PC-9 (cell line): ENCODE measurements at regions of chr2 and their contacts with region 1.

Region 1: GRCh38 chr2:120012771-120013596 is at the start of gene EPB41L5:
- DNase-seq: peak; percentile 88 to 95
- H3K4me3 ChIP-seq: peak within 1 kb of the TSS; percentile 82
- H3K27ac ChIP-seq: peak within 1 kb of the TSS; percentile 88
- H3K4me1 ChIP-seq: peaks cover 24% of the 10 kb centered on the region
- H3K27me3 ChIP-seq: no peaks in the 10 kb centered on the region
- CTCF ChIP-seq: no peak
- total RNA-seq, gene EPB41L5: 18.4 and 21.6 TPM in 2 replicates

Region 2: DNA sequence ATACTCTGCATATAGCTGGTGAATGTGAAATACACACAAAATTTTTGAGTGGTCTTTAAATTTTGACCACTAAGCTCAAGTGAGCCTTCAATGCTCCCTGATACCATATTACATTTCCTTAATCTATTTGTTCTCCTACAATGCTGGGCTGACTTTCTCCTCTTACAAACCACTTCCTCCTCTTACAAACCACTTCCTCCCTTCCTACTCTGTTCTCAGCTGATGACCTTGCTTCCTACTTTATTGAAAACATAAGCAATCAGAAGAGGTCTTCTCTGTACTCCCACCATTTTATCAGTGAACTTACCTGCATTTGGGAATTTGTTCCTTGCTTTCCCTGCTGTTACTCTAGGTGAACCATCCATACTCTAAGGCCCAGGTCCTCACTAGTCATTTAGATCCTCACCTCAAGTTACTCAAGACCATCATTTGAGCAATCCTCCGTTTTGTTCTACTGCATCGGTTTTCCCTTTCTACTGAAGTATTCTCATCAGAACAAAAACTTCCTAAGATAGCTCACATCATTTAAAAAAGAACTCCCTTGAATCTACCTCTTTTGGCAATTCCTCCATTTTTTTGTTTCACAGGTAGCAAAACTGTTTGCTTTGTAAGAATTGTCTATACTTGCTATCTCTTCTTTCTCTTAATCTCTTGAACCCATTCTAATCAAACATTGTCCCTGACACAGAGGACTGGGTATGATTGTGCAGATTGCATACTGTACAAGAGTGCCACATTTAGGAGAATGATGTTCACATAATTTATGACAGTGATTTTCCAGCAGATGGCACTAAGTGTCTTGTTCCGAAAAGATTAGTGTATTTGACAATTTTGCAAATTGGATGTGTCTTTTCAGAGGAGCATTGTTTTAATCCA is 96.4 kb after region 1 on chr2:
- CTCF ChIA-PET with region 1: no interaction called
- POLR2A ChIA-PET with region 1: interaction called, 3 read pairs
- intact Hi-C with region 1: loop called (anchors 2 kb)
- DNase-seq: peak in 1 of 2 experiments; percentile 54
- H3K4me3 ChIP-seq: no peak overlapping the region
- H3K27ac ChIP-seq: no peak overlapping the region
- H3K4me1 ChIP-seq: peaks cover 32% of the 10 kb centered on the region
- H3K27me3 ChIP-seq: no peaks in the 10 kb centered on the region
- CTCF ChIP-seq: peak; percentile 73

Region 3: DNA sequence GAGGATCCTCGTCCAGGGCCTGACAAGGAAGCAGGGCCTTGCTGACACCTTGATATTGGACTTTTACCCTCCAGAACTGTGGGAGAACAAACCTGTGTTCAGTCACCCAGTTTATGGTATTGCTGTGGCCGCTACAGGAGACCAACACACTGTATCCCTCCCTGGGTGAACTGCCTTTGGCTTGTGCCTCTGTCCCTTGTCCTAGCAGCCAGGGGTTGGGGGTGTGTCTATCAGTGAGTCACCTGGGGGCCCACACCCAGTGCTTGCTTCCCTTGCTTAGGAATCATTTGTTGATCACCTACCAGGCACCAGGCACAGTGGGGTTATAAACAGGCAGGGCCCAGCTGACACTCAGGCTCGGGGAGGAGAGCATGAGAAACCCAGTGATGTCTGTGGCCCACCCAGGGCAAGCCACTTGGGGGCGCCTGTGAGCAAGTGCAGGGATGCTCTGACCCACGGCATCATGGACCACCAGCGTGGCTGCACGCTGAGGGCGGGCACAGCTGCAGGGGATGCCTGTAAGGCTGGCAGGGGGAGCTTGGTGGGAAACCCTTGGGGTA is 193.1 kb after region 1 on chr2:
- CTCF ChIA-PET with region 1: no interaction called
- POLR2A ChIA-PET with region 1: interaction called, 10 read pairs
- intact Hi-C with region 1: no loop called
- DNase-seq: no peak
- H3K4me3 ChIP-seq: no peak overlapping the region
- H3K27ac ChIP-seq: no peak overlapping the region
- H3K4me1 ChIP-seq: no peaks in the 10 kb centered on the region
- H3K27me3 ChIP-seq: no peaks in the 10 kb centered on the region
- CTCF ChIP-seq: peak; percentile 49; the same call in 1 of the 2 replicates

Region 4: GRCh38 chr2:120539937-120540718 is 527.1 kb after region 1 on chr2:
- CTCF ChIA-PET with region 1: no interaction called
- POLR2A ChIA-PET with region 1: no interaction called
- intact Hi-C with region 1: no loop called
- DNase-seq: peak; percentile 86 to 95
- H3K4me3 ChIP-seq: peak overlapping the region; percentile 11; the same call in 1 of the 2 replicates
- H3K27ac ChIP-seq: peak overlapping the region; percentile 83
- H3K4me1 ChIP-seq: peaks cover 44% of the 10 kb centered on the region
- H3K27me3 ChIP-seq: no peaks in the 10 kb centered on the region
- CTCF ChIP-seq: no peak